OCI-LY7 (cell line): ENCODE measurements at regions of chr1 and their contacts with region 1.

Region 1: DNA sequence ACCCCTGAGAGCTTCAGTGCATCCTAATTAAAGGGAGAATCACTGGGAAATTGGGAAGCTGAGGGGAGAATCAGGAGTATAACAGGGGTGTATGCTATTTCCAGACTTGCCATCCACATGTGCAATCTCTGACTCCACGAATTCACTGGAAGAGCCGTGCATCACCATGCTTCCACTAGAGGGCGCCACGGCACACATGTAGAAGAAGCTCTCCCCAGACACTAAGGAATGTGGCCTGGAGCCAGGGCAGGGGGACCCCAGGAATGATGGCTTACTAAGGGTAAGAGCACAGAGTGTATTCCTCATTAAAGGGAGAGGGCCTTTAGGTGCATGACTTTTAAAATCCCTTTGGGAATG is 81.5 kb downstream of the ABCA4 start:
- DNase-seq: peak; percentile 67
- H3K4me3 ChIP-seq: no peak overlapping the region
- H3K27ac ChIP-seq: no peak overlapping the region
- H3K4me1 ChIP-seq: no peaks in the 10 kb centered on the region
- CTCF ChIP-seq: peak; percentile 97

Region 2: DNA sequence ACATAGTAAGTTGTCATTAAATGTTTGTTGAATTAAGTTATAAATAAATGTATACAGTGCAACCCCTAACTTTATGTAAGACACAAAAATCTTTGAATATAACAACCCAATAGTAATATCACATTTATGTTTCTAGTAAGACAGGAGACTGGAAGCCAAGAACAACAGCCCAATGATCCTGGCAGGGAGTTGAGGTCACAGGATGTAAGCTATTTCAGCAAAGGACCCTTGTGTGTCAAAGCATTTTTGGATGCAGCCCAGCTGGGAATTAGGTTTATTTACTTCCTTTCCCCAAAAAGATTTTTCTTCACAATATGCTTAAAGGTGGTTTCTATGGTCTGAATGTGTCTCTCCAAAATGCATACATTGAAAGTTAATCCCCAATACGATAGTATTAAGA is 115.5 kb after region 1 on chr1:
- CTCF ChIA-PET with region 1: no interaction called
- POLR2A ChIA-PET with region 1: no interaction called
- intact Hi-C with region 1: no loop called
- DNase-seq: no peak
- H3K4me3 ChIP-seq: no peak overlapping the region
- H3K27ac ChIP-seq: no peak overlapping the region
- H3K4me1 ChIP-seq: no peaks in the 10 kb centered on the region
- CTCF ChIP-seq: no peak

Region 3: GRCh38 chr1:94463765-94464330 is 424.4 kb after region 1 on chr1:
- CTCF ChIA-PET with region 1: no interaction called
- POLR2A ChIA-PET with region 1: interaction called, 3 read pairs
- intact Hi-C with region 1: loop called (anchors 5 kb)
- DNase-seq: peak; percentile 56
- H3K4me3 ChIP-seq: no peak overlapping the region
- H3K27ac ChIP-seq: no peak overlapping the region
- H3K4me1 ChIP-seq: peaks cover 12% of the 10 kb centered on the region
- CTCF ChIP-seq: peak; percentile 87

Region 4: GRCh38 chr1:94805912-94806311 is 766.4 kb after region 1 on chr1:
- CTCF ChIA-PET with region 1: no interaction called
- POLR2A ChIA-PET with region 1: no interaction called
- intact Hi-C with region 1: loop called (anchors 5 kb)
- DNase-seq: peak; percentile 64
- H3K4me3 ChIP-seq: no peak overlapping the region
- H3K27ac ChIP-seq: no peak overlapping the region
- H3K4me1 ChIP-seq: no peaks in the 10 kb centered on the region
- CTCF ChIP-seq: peak; percentile 93